Activated CD4-positive, alpha-beta memory T cell treated with anti-CD3 and anti-CD28 coated beads, Interleukin-2, amount 10 ng/mL, durations not matched to agents 7 days and 5 days (primary cell): ENCODE measurements at regions of chr10 and their contacts with region 1.

Region 1: DNA sequence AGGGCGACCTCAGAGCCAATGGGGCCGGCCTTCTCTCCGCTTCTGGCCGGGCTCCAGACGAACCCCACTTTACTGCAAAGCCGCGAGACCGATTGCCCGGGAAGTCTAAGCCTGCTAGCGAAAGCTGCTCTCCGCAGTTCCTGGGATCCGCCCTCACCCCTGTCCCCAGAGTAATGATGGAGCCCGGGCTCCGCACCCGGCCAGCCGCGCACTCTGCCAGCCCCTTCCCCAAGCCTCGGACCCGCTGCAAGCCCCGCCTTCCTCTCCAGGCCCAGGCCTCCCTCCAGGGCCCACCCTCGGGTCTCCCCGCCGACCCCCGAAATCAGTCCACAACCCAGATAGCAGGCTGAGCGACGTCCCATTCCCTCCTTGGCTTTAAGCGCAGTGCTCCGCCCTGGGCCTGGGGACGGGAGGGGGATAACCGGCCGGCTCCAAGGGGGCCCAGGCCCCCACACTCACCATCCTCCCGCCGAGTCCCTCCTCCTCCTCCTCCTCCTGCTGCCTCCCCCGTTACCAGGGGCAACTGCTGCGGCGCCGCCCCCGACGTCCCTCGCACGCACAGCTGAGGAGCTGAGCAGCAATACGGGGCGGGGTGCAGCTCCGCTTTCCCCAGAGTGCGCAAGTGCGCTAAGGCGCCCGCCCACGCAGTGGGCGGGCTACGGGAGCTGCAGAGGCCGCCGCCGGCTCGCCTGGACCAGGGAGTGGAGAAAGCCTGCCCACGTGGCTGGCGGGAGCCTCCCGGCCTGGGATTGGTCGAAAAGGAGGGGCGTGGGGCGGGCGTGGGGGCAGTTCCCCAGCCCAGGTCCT is at the start of gene ARL3:
- DNase-seq: peak; percentile 98
- H3K4me3 Mint-ChIP-seq: peak within 1 kb of the TSS; percentile 82
- H3K27ac Mint-ChIP-seq: peak within 1 kb of the TSS; percentile 80
- H3K4me1 Mint-ChIP-seq: peaks cover 64% of the 10 kb centered on the region
- H3K27me3 Mint-ChIP-seq: no peaks in the 10 kb centered on the region
- total RNA-seq, gene ARL3: 5.7 to 6.1 TPM

Region 2: GRCh38 chr10:102540023-102540422 is 174.0 kb before region 1 on chr10:
- CTCF ChIA-PET with region 1: no interaction called
- POLR2A ChIA-PET with region 1: no interaction called
- DNase-seq: no peak
- H3K4me3 Mint-ChIP-seq: no peak overlapping the region
- H3K27ac Mint-ChIP-seq: no peak overlapping the region
- H3K4me1 Mint-ChIP-seq: peaks cover 7% of the 10 kb centered on the region
- H3K27me3 Mint-ChIP-seq: no peaks in the 10 kb centered on the region

Region 3: DNA sequence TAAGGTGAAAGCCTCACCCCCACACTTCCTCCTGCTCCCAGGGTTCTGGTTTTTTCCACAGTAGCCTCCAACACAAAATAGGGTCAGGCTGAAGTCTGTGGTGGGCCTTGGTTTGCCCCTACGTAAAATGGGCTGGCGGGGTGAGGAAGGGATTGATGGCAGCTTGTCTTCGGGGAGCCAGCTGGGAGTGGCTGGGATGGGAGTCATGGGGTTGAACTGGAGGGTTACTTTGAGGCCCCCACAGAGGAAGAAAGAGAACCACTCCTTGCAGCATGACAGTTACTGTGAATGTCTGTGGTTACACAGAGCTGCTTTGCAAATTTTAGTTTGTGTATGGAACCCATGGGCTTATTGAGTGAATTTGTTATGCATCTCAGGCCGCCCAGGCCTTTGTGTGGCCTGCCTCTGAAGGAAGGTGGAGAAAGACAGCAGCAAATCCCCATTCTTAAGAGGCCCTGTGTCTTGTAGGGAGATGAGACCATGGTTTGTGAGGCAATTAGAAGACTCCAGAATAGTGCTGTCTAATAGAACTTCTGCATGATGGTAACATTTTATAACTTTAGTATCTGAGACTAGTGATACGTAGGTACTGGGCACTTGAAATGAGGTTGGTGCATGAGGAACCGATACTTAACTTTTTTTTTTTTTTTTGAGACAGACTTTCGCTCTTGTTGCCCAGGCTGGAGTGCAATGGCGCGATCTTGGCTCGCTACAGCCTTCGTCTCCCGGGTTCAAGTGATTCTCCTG is 61.7 kb before region 1 on chr10:
- CTCF ChIA-PET with region 1: interaction called, 4 read pairs
- POLR2A ChIA-PET with region 1: interaction called, 70 read pairs
- DNase-seq: no peak
- H3K4me3 Mint-ChIP-seq: peak overlapping the region; percentile 44
- H3K27ac Mint-ChIP-seq: peak overlapping the region; percentile 90
- H3K4me1 Mint-ChIP-seq: peaks cover 74% of the 10 kb centered on the region
- H3K27me3 Mint-ChIP-seq: no peaks in the 10 kb centered on the region

Region 4: GRCh38 chr10:102660888-102661657 is 52.9 kb before region 1 on chr10:
- CTCF ChIA-PET with region 1: interaction called, 17 read pairs
- POLR2A ChIA-PET with region 1: interaction called, 70 read pairs
- DNase-seq: peak; percentile 77
- H3K4me3 Mint-ChIP-seq: peak overlapping the region; percentile 47
- H3K27ac Mint-ChIP-seq: peak overlapping the region; percentile 85
- H3K4me1 Mint-ChIP-seq: peaks cover 51% of the 10 kb centered on the region
- H3K27me3 Mint-ChIP-seq: no peaks in the 10 kb centered on the region

Region 5: GRCh38 chr10:102669206-102670064 is 44.6 kb before region 1 on chr10:
- CTCF ChIA-PET with region 1: interaction called, 24 read pairs
- POLR2A ChIA-PET with region 1: interaction called, 70 read pairs
- DNase-seq: no peak
- H3K4me3 Mint-ChIP-seq: no peak overlapping the region
- H3K27ac Mint-ChIP-seq: no peak overlapping the region
- H3K4me1 Mint-ChIP-seq: peaks cover 24% of the 10 kb centered on the region
- H3K27me3 Mint-ChIP-seq: no peaks in the 10 kb centered on the region

Region 6: DNA sequence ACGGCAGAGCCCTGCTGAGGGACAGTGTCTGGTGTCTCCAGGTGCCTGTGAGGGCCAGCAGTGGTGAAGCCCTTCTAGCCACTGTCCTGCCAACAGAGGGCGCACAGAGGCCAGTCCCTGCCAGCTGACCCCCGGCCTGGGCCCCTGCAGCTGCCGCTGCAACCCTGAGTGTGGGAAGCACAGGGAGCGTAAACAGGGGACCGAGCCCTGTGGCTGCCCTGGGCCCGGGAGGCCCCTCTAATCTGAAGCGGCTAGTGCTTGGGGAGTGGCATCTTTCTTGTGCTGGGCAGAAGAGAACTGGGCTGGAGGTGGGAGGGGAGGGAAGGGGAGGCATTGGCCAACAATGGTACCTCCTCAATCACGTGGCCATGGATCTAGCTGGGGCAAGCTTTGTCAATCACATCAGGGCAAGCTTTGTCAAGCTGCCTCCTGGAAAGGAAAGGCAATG is 35.2 kb before region 1 on chr10:
- CTCF ChIA-PET with region 1: interaction called, 24 read pairs
- POLR2A ChIA-PET with region 1: interaction called, 30 read pairs
- DNase-seq: no peak
- H3K4me3 Mint-ChIP-seq: no peak overlapping the region
- H3K27ac Mint-ChIP-seq: no peak overlapping the region
- H3K4me1 Mint-ChIP-seq: peaks cover 49% of the 10 kb centered on the region
- H3K27me3 Mint-ChIP-seq: no peaks in the 10 kb centered on the region

Region 7: DNA sequence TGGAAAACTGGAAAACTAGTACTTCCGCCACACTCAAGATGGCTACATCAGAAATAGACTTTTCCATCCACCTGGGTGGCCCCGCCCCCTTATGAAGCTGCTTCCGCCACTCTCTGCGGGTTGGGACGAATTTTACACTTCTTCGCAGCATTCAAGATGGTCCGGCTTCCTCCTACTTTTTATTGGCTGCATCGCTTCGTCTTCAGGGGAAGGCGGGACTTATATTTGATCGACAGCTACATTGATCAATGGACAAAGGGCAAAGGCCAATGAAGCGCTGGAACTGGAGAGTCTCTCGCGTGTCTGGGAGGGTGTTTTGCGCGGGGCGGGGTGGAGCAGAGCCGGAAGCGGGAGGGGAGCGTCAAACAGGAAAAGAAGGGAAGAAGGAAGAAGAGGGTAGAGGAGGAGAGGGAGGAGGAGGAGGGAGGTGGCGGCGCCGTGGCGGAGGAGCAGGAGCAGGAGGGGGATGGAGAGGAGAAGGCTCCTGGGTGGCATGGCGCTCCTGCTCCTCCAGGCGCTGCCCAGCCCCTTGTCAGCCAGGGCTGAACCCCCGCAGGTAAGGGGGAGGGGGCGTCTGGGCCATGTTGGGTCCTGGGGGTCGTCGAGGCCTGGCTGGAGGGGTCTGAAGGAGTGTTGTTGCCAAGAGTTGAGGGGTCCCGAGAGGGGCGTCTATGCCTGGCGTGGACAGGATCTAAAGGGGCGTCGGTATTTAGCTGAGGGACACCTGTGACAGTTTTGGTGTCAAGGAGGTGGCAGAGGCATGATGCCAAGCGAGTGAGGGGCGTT is 29.8 kb after region 1 on chr10 and contains the start of gene WBP1L:
- CTCF ChIA-PET with region 1: interaction called, 34 read pairs
- POLR2A ChIA-PET with region 1: interaction called, 19 read pairs
- DNase-seq: peak; percentile 96
- H3K4me3 Mint-ChIP-seq: peak within 1 kb of the TSS; percentile 100
- H3K27ac Mint-ChIP-seq: peak within 1 kb of the TSS; percentile 82
- H3K4me1 Mint-ChIP-seq: peaks cover 41% of the 10 kb centered on the region
- H3K27me3 Mint-ChIP-seq: no peaks in the 10 kb centered on the region
- total RNA-seq, gene WBP1L: 31.7 to 31.9 TPM

Region 8: DNA sequence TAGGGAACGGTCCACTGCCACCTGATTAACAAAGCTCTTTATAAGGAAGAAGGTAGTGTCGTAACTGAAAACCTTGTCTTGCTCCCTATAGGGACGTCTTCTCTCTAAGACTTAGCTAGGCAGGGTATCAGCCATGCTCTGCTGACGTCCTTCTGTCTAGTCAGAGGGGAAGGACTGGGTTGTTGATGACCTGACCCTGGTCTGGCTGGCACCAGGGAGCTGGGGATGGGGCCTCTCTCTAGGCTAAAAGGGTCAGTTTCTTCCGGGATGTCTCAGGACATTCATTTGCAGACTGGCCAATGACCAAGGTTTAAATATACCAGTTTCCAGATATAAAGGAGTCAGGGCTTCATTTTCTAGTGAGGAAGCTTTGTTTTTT is 113.6 kb after region 1 on chr10:
- CTCF ChIA-PET with region 1: no interaction called
- POLR2A ChIA-PET with region 1: no interaction called
- DNase-seq: no peak
- H3K4me3 Mint-ChIP-seq: no peak overlapping the region
- H3K27ac Mint-ChIP-seq: no peak overlapping the region
- H3K4me1 Mint-ChIP-seq: peaks cover 3% of the 10 kb centered on the region
- H3K27me3 Mint-ChIP-seq: peaks cover 2% of the 10 kb centered on the region